ENCODE measurements at regions of chr1 and their contacts with region 1.

Region 1: DNA sequence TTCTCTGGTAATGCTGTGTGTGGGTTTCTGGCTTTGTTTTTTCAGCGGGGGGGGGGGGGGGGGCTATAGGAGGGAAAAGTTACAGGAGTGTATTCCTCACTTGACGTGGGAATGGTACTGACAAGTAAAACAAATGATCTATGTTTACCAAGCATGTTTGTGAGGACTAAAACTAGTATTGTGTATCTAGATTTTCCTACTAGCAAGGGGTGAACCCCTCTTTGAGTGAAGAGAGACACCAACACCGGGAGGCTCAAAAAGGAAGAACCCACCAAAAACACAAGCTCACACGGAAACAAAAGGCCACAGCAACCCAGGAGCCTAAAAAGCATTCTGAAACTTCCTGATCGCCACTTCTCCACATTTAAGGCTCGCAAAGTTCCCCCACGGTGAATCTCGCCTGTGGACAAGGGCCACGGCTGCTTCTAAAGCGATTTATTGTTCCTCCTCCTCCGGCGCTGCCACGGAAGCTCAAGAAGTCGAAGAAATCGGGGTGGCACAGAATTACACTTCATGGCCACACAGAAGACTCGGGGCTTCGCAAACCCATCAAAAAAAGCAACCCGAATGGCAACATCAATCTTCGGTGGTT is 703 bp downstream of the PUM1 start:
- DNase-seq: no peak
- H3K4me3 ChIP-seq: peak overlapping the region; percentile 74
- CTCF ChIP-seq: no peak

Region 2: DNA sequence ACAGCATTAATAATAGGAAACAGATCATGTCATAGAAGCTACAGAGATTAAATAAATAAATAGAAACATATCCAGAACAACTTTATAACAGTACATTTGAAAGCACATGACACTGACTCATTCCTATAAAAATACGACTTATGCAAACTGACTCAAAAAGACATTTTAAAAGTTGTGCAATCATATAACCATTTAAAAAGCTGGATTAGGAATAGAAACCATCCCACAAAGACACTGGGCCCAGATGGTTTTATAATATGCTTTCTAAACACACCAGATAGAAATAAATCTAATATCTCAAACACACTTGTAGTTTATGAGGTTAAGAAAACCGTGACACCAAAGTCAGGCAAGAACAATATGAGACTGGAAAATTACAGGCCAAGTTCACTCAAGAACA is 389.1 kb before region 1 on chr1:
- in situ Hi-C with region 1: no loop called
- DNase-seq: no peak
- H3K4me3 ChIP-seq: no peak overlapping the region
- CTCF ChIP-seq: no peak

Region 3: DNA sequence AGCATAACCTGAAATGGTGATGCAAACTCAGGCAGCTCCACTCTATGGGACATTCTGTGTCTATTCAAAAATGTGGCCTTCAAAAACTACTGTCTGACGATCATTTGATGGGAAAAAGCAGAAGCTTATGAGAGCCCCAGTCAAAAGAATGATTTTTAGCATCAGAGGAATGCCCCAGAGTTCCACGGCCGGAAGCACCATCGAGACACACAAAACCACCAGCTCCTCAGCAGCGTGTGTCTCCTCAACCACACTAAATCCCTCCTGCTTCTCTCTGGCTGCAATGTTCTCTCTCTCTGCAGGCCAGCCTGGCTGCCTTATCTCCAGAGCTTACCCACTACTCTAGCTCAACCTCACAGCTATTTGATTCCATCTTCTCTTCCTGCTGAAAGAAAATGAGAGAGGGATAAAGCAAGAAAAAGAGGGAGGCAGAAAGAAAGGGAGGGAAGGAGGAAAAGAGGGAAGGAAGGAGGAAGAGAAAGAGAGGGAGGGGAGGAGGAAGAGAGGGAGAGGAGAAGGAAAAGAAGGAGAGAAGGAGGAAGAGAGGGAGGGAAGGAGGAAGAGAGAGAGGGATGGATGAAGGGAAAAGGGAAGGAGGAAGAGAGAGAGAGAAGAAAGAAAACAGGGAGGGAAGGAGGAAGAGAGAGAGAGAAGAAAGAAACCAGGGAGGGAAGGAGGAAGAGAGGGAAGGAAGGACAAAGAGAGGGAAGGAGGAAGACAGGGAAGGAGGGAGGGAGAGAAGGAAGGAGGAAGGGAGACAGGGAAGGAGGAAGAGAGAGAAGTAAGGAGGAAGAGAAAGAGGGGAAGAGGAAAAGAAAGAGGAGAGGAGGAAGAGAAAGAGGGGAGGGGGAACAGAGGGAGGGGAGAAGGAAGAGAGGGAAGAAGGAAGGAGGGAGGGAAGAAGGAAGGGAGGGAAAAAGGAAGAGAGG is 273.7 kb before region 1 on chr1:
- in situ Hi-C with region 1: no loop called
- DNase-seq: no peak
- H3K4me3 ChIP-seq: no peak overlapping the region
- CTCF ChIP-seq: no peak

Region 4: GRCh38 chr1:31010086-31010989 is 54.5 kb before region 1 on chr1:
- in situ Hi-C with region 1: loop called (anchors 5 kb)
- DNase-seq: no peak
- H3K4me3 ChIP-seq: no peak overlapping the region
- CTCF ChIP-seq: no peak

Region 5: GRCh38 chr1:31155216-31155841 is 90.5 kb after region 1 on chr1:
- in situ Hi-C with region 1: loop called (anchors 5 kb)
- DNase-seq: peak; percentile 16
- H3K4me3 ChIP-seq: peak overlapping the region; percentile 61
- CTCF ChIP-seq: peak; percentile 22

Measured in astrocyte of the cerebellum (primary cell).